CD8-positive, alpha-beta T cell (primary cell): ENCODE measurements at regions of chr14 and their contacts with region 1.

Region 1: GRCh38 chr14:64438181-64438841 is 27.0 kb upstream of the AKAP5 start:
- DNase-seq: peak in 3 of 9 experiments; percentile 27 to 41 (median 31)
- ATAC-seq: peak; percentile 51
- H3K4me3 ChIP-seq: no peak overlapping the region
- H3K4me3 Mint-ChIP-seq: no peak overlapping the region
- H3K27ac ChIP-seq: no peak overlapping the region
- H3K27ac Mint-ChIP-seq: peak overlapping the region; percentile 21
- H3K4me1 ChIP-seq: no peaks in the 10 kb centered on the region
- H3K4me1 Mint-ChIP-seq: peaks cover 12% of the 10 kb centered on the region
- H3K27me3 ChIP-seq: no peaks in the 10 kb centered on the region
- H3K27me3 Mint-ChIP-seq: no peaks in the 10 kb centered on the region
- CTCF ChIP-seq: no peak

Region 2: DNA sequence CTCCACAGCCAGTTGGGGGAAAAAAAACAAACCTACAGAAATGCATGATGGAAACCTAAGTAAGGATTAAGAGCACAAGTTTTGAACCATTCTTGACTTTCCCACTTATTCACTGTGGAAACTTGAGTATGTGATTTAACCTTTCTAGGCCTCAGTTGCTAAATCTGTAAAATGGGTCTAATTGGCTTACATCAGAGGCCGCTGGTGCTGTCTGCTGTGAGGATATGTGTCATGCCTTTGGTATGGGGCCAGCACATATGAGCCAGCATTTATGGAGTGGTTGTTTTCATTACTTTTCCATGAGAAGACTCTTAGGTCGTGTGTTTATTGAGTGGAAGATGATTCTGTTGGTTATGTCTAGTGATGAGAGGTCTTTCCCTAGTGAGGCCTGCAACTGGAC is 246.6 kb before region 1 on chr14:
- CTCF ChIA-PET with region 1: no interaction called
- POLR2A ChIA-PET with region 1: no interaction called
- intact Hi-C with region 1: no loop called
- DNase-seq: no peak
- ATAC-seq: no peak
- H3K4me3 ChIP-seq: no peak overlapping the region
- H3K4me3 Mint-ChIP-seq: no peak overlapping the region
- H3K27ac ChIP-seq: no peak overlapping the region
- H3K27ac Mint-ChIP-seq: no peak overlapping the region
- H3K4me1 ChIP-seq: no peaks in the 10 kb centered on the region
- H3K4me1 Mint-ChIP-seq: peaks cover 29% of the 10 kb centered on the region
- H3K27me3 ChIP-seq: no peaks in the 10 kb centered on the region
- H3K27me3 Mint-ChIP-seq: no peaks in the 10 kb centered on the region
- CTCF ChIP-seq: no peak

Region 3: DNA sequence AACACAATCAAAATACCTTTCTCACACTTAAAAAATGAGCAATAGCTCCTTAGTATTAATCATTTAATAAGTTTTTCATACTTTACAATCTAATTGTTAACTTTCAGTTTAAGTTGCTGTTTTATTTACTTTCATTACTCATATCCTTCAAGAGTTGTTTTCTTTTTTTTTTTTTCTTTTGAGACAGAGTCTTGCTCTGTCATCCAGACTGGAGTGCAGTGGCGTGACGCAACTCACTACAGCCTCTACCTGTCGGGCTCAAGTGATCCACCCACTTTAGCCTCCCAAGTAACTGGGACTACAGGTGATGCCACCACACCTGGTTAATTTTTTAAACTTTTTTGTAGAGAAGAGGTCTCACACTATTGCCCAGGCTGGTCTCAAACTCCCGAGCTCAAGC is 82.4 kb after region 1 on chr14:
- CTCF ChIA-PET with region 1: no interaction called
- POLR2A ChIA-PET with region 1: interaction called, 4 read pairs
- intact Hi-C with region 1: loop called in 1 of 2 experiments (anchors 5 kb)
- DNase-seq: no peak
- ATAC-seq: no peak
- H3K4me3 ChIP-seq: no peak overlapping the region
- H3K4me3 Mint-ChIP-seq: no peak overlapping the region
- H3K27ac ChIP-seq: no peak overlapping the region
- H3K27ac Mint-ChIP-seq: no peak overlapping the region
- H3K4me1 ChIP-seq: peaks cover 13% of the 10 kb centered on the region
- H3K4me1 Mint-ChIP-seq: peaks cover 39% of the 10 kb centered on the region
- H3K27me3 ChIP-seq: no peaks in the 10 kb centered on the region
- H3K27me3 Mint-ChIP-seq: no peaks in the 10 kb centered on the region
- CTCF ChIP-seq: no peak